Activated CD8-positive, alpha-beta memory T cell treated with anti-CD3 and anti-CD28 coated beads, Interleukin-2, amount 10 ng/mL, durations not matched to agents 7 days and 5 days (primary cell): ENCODE measurements at regions of chr17 and their contacts with region 1.

Region 1: GRCh38 chr17:63697341-63698286 is 2.3 kb downstream of the LIMD2 start:
- DNase-seq: peak; percentile 92
- ATAC-seq: peak; percentile 35
- H3K4me3 Mint-ChIP-seq: peak overlapping the region; percentile 84
- H3K27ac Mint-ChIP-seq: peak overlapping the region; percentile 94
- H3K4me1 Mint-ChIP-seq: peaks cover 48% of the 10 kb centered on the region
- H3K27me3 Mint-ChIP-seq: no peaks in the 10 kb centered on the region

Region 2: GRCh38 chr17:63621766-63622519 is 75.7 kb before region 1 on chr17 and contains the start of gene MAP3K3:
- CTCF ChIA-PET with region 1: interaction called, 14 read pairs
- DNase-seq: peak; percentile 99
- ATAC-seq: peak; percentile 91
- H3K4me3 Mint-ChIP-seq: peak within 1 kb of the TSS; percentile 97
- H3K27ac Mint-ChIP-seq: peak within 1 kb of the TSS; percentile 89
- H3K4me1 Mint-ChIP-seq: peaks cover 29% of the 10 kb centered on the region
- H3K27me3 Mint-ChIP-seq: peaks cover 3% of the 10 kb centered on the region
- total RNA-seq, gene MAP3K3: 29.0 to 36.5 TPM

Region 3: DNA sequence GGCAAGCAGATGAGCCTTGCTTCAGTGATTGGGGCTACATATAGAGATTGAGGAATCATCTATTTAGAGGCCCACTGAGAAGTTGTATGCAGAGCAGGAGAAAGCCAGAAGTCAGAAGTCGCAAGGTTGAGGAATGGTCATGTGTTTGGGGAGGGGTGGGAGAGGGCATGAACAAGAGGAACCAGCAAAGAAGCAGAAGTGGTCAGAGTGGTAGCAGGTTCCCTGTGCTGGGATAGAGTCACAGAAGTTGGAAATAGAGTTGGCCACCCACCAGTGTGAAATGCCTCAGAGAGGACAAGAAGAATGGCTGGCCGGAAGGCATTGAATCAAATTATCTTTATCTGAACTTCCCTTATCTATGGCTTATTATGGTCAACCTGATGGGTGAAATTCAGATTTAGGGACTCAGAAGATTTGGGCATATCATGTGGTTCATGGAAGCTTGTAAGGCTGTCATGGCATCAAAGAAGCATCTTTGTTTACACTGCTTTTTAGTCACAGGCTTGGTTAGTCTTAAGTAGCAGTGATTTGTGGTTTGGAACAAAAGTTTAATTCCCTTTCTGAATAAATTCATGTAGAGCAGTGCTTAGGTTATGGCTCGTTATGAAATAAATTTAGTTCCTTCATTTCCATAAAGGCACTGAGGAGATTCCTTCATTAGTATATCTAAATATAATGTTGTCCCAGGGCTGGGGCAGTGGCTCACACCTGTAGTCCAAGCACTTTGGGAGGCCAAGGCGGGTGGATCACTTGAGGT is 55.7 kb before region 1 on chr17:
- CTCF ChIA-PET with region 1: no interaction called
- DNase-seq: no peak
- ATAC-seq: no peak
- H3K4me3 Mint-ChIP-seq: no peak overlapping the region
- H3K27ac Mint-ChIP-seq: no peak overlapping the region
- H3K4me1 Mint-ChIP-seq: peaks cover 2% of the 10 kb centered on the region
- H3K27me3 Mint-ChIP-seq: no peaks in the 10 kb centered on the region

Region 4: GRCh38 chr17:63714547-63715277 is 17.1 kb after region 1 on chr17:
- CTCF ChIA-PET with region 1: interaction called, 133 read pairs
- DNase-seq: peak; percentile 31
- ATAC-seq: no peak
- H3K4me3 Mint-ChIP-seq: no peak overlapping the region
- H3K27ac Mint-ChIP-seq: no peak overlapping the region
- H3K4me1 Mint-ChIP-seq: peaks cover 4% of the 10 kb centered on the region
- H3K27me3 Mint-ChIP-seq: no peaks in the 10 kb centered on the region

Region 5: GRCh38 chr17:63741221-63742049 is 43.8 kb after region 1 on chr17 and contains the start of gene STRADA:
- CTCF ChIA-PET with region 1: interaction called, 11 read pairs
- DNase-seq: peak; percentile 100
- ATAC-seq: peak; percentile 95
- H3K4me3 Mint-ChIP-seq: peak within 1 kb of the TSS; percentile 94
- H3K27ac Mint-ChIP-seq: peak within 1 kb of the TSS; percentile 89
- H3K4me1 Mint-ChIP-seq: peaks cover 26% of the 10 kb centered on the region
- H3K27me3 Mint-ChIP-seq: no peaks in the 10 kb centered on the region
- total RNA-seq, gene STRADA: 59.9 to 76.8 TPM